PC-3 (cell line): ENCODE measurements at regions of chr10 and their contacts with region 1.

Region 1: DNA sequence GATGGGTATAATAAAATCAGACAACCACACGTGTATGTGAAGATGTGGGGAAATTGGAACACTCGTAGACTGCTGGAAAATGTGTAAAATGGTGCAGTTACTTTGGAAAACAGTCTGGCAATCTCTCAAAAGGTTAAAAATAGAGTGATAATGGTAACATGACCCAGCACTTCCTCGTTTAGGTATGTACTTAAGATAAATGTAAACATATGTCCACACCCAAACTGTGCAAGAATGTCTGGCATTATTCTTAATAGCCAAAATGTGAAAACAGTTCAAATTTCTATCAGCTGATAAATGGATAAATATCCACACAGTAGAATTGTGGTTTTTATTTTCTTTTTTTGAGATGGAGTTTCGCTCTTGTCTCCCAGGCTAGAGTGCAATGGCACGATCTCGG is 272.8 kb downstream of the ZNF248 start:
- DNase-seq: peak; percentile 89
- ATAC-seq: peak; percentile 77
- H3K4me3 ChIP-seq: no peak overlapping the region
- H3K27ac ChIP-seq: no peak overlapping the region
- H3K4me1 ChIP-seq: peaks cover 26% of the 10 kb centered on the region
- H3K27me3 ChIP-seq: no peaks in the 10 kb centered on the region
- CTCF ChIP-seq: no peak

Region 2: GRCh38 chr10:37488792-37489657 is 95.6 kb before region 1 on chr10:
- CTCF ChIA-PET with region 1: no interaction called
- POLR2A ChIA-PET with region 1: no interaction called
- intact Hi-C with region 1: loop called (anchors 1 kb)
- DNase-seq: peak; percentile 99
- ATAC-seq: peak; percentile 92
- H3K4me3 ChIP-seq: peak overlapping the region; percentile 36
- H3K27ac ChIP-seq: peak overlapping the region; percentile 87
- H3K4me1 ChIP-seq: peaks cover 23% of the 10 kb centered on the region
- H3K27me3 ChIP-seq: no peaks in the 10 kb centered on the region
- CTCF ChIP-seq: peak; percentile 50; the same call in 1 of the 2 replicates

Region 3: DNA sequence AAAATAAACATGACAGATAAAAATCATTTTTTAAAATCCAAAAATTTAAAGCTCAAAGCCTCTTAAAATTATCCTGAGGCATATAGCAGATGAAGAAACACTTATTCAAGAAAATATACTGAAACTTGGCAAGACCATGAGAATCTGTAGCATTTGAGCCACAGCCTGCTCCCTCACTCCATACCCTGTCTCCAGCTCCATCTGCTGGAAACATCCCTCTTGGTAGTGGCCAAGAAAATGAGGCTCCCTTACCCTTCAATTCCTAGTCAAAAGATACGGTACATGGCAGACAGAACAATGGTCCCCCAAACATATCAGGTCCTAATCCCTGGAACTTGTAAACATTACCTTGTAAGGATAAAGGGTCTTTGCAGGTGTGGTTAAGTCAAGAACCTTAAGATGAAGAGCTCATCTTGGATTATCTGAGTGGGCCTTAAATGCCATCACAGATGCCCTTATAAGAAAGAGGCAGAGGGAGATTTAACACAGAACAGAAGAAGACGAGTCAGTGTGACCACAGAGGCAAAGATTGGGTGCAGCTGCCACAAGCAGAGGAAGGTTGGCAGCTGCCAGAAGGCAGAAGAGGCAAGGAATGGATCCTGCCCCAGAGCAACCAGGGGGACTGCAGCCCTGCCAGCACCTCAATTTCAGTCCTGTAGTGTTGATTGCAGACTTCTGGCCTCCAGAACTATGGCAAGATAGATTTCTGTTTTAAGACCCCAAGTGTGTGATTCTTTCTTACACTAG is 123.4 kb after region 1 on chr10:
- CTCF ChIA-PET with region 1: no interaction called
- POLR2A ChIA-PET with region 1: no interaction called
- intact Hi-C with region 1: loop called (anchors 5 kb)
- DNase-seq: peak; percentile 44
- ATAC-seq: peak; percentile 51
- H3K4me3 ChIP-seq: no peak overlapping the region
- H3K27ac ChIP-seq: no peak overlapping the region
- H3K4me1 ChIP-seq: peaks cover 6% of the 10 kb centered on the region
- H3K27me3 ChIP-seq: no peaks in the 10 kb centered on the region
- CTCF ChIP-seq: peak; percentile 62; the same call in 1 of the 2 replicates

Region 4: DNA sequence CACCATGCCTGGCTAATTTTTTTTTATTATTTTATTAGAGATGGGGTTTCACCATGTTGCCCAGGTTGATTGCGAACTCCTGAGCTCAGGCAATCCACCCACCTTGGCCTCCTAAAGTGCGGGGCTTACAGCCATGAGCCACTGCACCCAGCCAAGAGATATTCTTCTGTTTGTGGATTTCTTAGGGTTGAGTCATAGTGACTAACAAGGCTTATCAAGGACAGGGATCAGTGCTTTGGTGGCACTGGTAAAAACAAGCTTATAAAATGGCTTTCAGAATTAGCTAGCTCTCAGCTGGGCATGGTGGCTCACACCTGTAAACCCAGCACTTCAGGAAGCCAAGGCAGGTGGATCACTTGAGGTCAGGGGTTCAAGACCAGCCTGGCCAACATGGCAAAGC is 150.3 kb after region 1 on chr10:
- CTCF ChIA-PET with region 1: no interaction called
- POLR2A ChIA-PET with region 1: no interaction called
- intact Hi-C with region 1: loop called (anchors 5 kb)
- DNase-seq: peak; percentile 100
- ATAC-seq: peak; percentile 72
- H3K4me3 ChIP-seq: no peak overlapping the region
- H3K27ac ChIP-seq: peak overlapping the region; percentile 7; the same call in 1 of the 2 replicates
- H3K4me1 ChIP-seq: peaks cover 42% of the 10 kb centered on the region
- H3K27me3 ChIP-seq: no peaks in the 10 kb centered on the region
- CTCF ChIP-seq: no peak

Region 5: GRCh38 chr10:37747081-37747480 is 162.4 kb after region 1 on chr10:
- CTCF ChIA-PET with region 1: no interaction called
- POLR2A ChIA-PET with region 1: no interaction called
- intact Hi-C with region 1: loop called (anchors 5 kb)
- DNase-seq: no peak
- ATAC-seq: no peak
- H3K4me3 ChIP-seq: no peak overlapping the region
- H3K27ac ChIP-seq: no peak overlapping the region
- H3K4me1 ChIP-seq: peaks cover 12% of the 10 kb centered on the region
- H3K27me3 ChIP-seq: no peaks in the 10 kb centered on the region
- CTCF ChIP-seq: no peak